Keratinocyte (primary cell): ENCODE measurements at regions of chr1 and their contacts with region 1.

Region 1: GRCh38 chr1:3530926-3531818 is 76.7 kb downstream of the ARHGEF16 start:
- DNase-seq: no peak
- H3K4me3 ChIP-seq: peak overlapping the region; percentile 47 to 79 (median 73)
- H3K27ac ChIP-seq: no peak overlapping the region
- H3K4me1 ChIP-seq: peaks cover 16% of the 10 kb centered on the region
- H3K27me3 ChIP-seq: peaks cover 12% of the 10 kb centered on the region
- CTCF ChIP-seq: no peak

Region 2: GRCh38 chr1:3471302-3472087 is 59.7 kb before region 1 on chr1:
- dilution Hi-C with region 1: no loop called
- DNase-seq: no peak
- H3K4me3 ChIP-seq: no peak overlapping the region
- H3K27ac ChIP-seq: peak overlapping the region; percentile 20
- H3K4me1 ChIP-seq: peaks cover 62% of the 10 kb centered on the region
- H3K27me3 ChIP-seq: no peaks in the 10 kb centered on the region
- CTCF ChIP-seq: peak in 2 of 3 experiments; percentile 36 to 55

Region 3: GRCh38 chr1:3483801-3484444 is 47.2 kb before region 1 on chr1:
- dilution Hi-C with region 1: no loop called
- DNase-seq: no peak
- H3K4me3 ChIP-seq: no peak overlapping the region
- H3K27ac ChIP-seq: no peak overlapping the region
- H3K4me1 ChIP-seq: peaks cover 16% of the 10 kb centered on the region
- H3K27me3 ChIP-seq: no peaks in the 10 kb centered on the region
- CTCF ChIP-seq: peak; percentile 87 to 98 (median 87)

Region 4: GRCh38 chr1:3649342-3650247 is 118.4 kb after region 1 on chr1 and contains the start of gene WRAP73:
- dilution Hi-C with region 1: loop called (anchors 25 kb)
- DNase-seq: peak; percentile 55
- H3K4me3 ChIP-seq: peak within 1 kb of the TSS; percentile 80 to 96 (median 95)
- H3K27ac ChIP-seq: no peak within 1 kb of the TSS
- H3K4me1 ChIP-seq: peaks cover 8% of the 10 kb centered on the region
- H3K27me3 ChIP-seq: peaks cover 42% of the 10 kb centered on the region
- CTCF ChIP-seq: peak in 1 of 3 experiments; percentile 18
- polyA plus RNA-seq, gene WRAP73: 16.6 to 24.9 TPM (median 18.9 TPM) in 3 replicates